ENCODE measurements at regions of chr1 and their contacts with region 1.

Region 1: DNA sequence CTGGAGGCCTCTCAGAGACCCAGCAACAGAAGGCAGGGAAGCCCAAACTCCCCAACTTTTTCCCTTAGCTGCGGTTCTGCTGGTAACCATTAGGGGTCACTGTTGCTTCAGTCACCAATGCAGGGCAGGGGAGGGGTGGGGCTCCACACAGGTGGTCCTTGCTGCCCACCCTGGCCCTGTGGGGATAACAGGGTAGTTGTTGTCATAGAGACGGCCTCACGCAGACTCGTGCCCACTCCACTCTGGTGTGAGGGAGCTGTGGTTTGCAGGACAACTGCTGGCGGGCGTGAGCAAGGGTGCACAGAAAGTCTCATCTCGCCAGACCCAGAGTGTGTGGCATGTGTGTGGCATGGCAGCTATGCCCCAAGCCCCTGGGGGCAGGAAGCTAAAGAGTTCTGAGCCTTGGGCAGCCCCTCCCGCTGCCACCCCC is 19.9 kb downstream of the INSRR start:
- DNase-seq: peak; percentile 66
- H3K4me3 Mint-ChIP-seq: no peak overlapping the region
- H3K27ac Mint-ChIP-seq: no peak overlapping the region
- H3K4me1 Mint-ChIP-seq: peaks cover 34% of the 10 kb centered on the region
- H3K27me3 Mint-ChIP-seq: peaks cover 82% of the 10 kb centered on the region

Region 2: GRCh38 chr1:156797212-156797871 is 41.7 kb before region 1 on chr1:
- CTCF ChIA-PET with region 1: interaction called, 43 read pairs
- DNase-seq: peak; percentile 79
- H3K4me3 Mint-ChIP-seq: no peak overlapping the region
- H3K27ac Mint-ChIP-seq: no peak overlapping the region
- H3K4me1 Mint-ChIP-seq: peaks cover 9% of the 10 kb centered on the region
- H3K27me3 Mint-ChIP-seq: no peaks in the 10 kb centered on the region

Region 3: DNA sequence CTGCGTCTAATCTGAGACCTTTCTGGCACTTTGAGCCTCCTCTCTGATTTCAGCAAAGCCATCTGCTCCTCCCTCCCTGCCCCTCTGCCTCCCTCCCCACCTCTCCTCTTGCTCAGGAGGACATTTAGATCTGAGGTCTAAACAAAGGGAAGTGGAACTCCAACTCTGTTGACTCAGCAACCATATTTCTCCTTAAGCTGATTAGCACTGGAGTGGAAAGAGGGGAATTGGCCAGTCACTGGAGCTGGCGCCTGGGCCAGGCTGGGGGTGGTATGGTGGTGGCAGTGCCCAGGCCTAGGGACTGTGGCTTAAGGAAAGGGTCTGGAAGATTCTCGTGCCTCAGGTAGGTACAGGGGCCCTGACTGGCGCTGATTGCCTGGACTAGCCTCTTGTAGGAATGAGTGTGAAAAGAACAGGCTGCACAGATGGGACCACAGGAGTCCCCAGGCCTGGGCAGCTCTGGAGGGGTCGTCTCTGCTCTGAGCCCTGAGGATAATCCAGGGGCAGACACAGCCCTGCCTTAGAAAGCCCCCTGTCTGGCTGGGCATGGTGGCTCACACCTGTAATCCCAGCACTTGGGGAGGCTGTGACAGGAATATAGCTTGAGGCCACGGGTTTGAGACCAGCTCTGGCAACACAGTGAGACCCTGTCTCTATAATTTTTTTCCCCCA is 34.3 kb before region 1 on chr1:
- CTCF ChIA-PET with region 1: interaction called, 47 read pairs
- DNase-seq: no peak
- H3K4me3 Mint-ChIP-seq: no peak overlapping the region
- H3K27ac Mint-ChIP-seq: peak overlapping the region; percentile 40
- H3K4me1 Mint-ChIP-seq: peaks cover 40% of the 10 kb centered on the region
- H3K27me3 Mint-ChIP-seq: no peaks in the 10 kb centered on the region

Region 4: DNA sequence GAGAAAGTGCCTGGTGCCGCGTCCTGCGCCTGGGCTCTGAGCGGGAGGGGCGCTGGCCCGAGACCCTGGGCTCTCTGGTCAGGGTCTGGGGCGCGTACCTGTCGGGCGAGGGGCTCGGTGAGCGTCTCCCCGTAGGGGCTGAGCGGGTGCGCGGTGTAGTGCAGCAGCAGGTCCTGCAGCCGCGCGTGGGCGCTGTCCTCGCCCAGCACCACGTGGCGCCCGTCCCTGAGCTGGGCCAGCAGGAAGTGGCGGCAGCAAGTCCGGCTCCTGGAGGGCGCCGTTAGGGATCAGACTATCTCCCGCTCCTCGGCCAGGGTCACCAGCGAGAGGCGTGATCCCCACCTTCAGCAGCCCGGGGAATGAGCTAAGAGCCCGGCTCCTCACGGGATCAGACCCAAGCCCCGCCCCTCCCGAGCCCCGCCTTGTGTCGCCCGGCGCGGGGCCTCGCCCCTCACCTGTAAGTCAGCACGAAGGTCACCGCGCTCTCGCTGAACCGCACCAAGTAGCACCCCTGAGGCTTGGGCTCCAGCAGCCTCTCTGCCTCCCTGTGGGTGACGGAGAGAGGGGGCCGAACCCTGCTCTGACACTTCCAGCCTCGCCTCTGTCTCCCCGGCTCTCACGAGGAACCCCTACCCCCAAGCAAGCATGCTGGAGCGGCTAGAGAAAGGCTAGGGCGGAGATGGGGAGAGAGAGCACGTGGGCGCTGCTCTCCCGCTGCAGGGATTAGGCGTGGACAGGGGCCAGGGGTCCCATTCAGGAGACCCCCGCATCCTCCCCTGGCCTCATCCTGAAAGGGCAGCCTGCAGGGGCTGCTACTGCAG is 25.0 kb before region 1 on chr1:
- CTCF ChIA-PET with region 1: interaction called, 47 read pairs
- DNase-seq: peak; percentile 84
- H3K4me3 Mint-ChIP-seq: peak overlapping the region; percentile 93
- H3K27ac Mint-ChIP-seq: peak overlapping the region; percentile 100
- H3K4me1 Mint-ChIP-seq: peaks cover 84% of the 10 kb centered on the region
- H3K27me3 Mint-ChIP-seq: peaks cover 5% of the 10 kb centered on the region

Region 5: GRCh38 chr1:156821801-156822200 is 17.2 kb before region 1 on chr1:
- CTCF ChIA-PET with region 1: interaction called, 20 read pairs
- DNase-seq: no peak
- H3K4me3 Mint-ChIP-seq: no peak overlapping the region
- H3K27ac Mint-ChIP-seq: no peak overlapping the region
- H3K4me1 Mint-ChIP-seq: peaks cover 29% of the 10 kb centered on the region
- H3K27me3 Mint-ChIP-seq: peaks cover 51% of the 10 kb centered on the region

Region 6: GRCh38 chr1:156828400-156829124 is 10.4 kb before region 1 on chr1:
- CTCF ChIA-PET with region 1: interaction called, 20 read pairs
- DNase-seq: no peak
- H3K4me3 Mint-ChIP-seq: no peak overlapping the region
- H3K27ac Mint-ChIP-seq: no peak overlapping the region
- H3K4me1 Mint-ChIP-seq: peaks cover under 1% of the 10 kb centered on the region
- H3K27me3 Mint-ChIP-seq: peaks cover 66% of the 10 kb centered on the region

Region 7: GRCh38 chr1:156892190-156893047 is 53.4 kb after region 1 on chr1:
- CTCF ChIA-PET with region 1: interaction called, 55 read pairs
- DNase-seq: peak; percentile 92
- H3K4me3 Mint-ChIP-seq: peak overlapping the region; percentile 59
- H3K27ac Mint-ChIP-seq: peak overlapping the region; percentile 66
- H3K4me1 Mint-ChIP-seq: peaks cover 27% of the 10 kb centered on the region
- H3K27me3 Mint-ChIP-seq: peaks cover 94% of the 10 kb centered on the region

Measured in activated naive CD4-positive, alpha-beta T cell treated with anti-CD3 and anti-CD28 coated beads, Interleukin-2, amount 10 ng/mL, durations not matched to agents 7 days and 5 days (primary cell).